ENCODE measurements at regions of chr2 and their contacts with region 1.

Region 1: DNA sequence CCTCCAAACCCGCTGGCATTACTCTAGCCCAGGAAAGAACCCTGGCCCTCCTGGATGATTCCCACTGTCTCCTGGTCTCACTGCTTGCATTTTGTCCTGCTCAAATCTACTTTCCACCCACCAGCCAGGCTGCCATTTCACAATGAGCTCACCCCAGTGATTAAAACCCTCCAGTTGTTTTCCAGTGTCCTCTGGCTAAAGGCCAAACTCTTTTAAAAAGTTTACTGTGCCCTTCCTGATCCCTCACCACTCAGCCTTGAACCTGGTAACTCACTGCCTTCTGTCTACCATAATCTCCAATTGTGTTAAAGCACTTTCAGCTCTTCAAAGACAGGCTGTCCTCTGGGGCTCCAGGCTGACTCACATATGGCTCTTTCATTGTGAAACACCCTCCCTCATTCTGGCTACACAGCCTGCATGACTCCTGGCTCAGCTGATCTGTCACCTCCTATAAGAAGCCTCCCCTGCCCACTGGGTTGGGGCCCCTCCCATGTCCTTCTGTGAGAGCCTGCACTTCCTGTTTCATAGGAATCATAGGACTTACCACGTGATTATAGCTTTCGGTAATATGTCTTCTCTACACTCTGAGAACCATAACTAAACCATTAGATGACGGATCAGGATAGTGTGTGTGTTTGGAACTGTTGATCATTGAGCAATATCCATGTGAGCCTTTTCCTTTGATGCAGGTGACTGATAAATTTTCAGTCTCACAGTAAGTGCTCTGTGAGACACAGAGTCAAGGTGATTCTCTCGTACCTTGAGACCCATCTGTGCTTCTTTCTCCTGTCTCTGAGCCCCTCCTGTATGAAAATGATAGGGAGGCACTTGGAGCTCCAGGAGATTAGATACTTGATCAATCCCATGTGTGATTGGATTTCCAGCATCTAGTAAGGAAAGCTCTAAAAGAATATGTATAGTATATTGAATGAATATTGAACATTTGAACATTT is 590.8 kb upstream of the ID2 start:
- DNase-seq: peak; percentile 85
- H3K4me3 Mint-ChIP-seq: no peak overlapping the region
- H3K27ac Mint-ChIP-seq: no peak overlapping the region
- H3K4me1 Mint-ChIP-seq: no peaks in the 10 kb centered on the region
- H3K27me3 Mint-ChIP-seq: no peaks in the 10 kb centered on the region

Region 2: GRCh38 chr2:7845332-7845731 is 245.7 kb before region 1 on chr2:
- CTCF ChIA-PET with region 1: no interaction called
- intact Hi-C with region 1: loop called (anchors 1 kb)
- DNase-seq: no peak
- H3K4me3 Mint-ChIP-seq: no peak overlapping the region
- H3K27ac Mint-ChIP-seq: no peak overlapping the region
- H3K4me1 Mint-ChIP-seq: peaks cover 19% of the 10 kb centered on the region
- H3K27me3 Mint-ChIP-seq: peaks cover 5% of the 10 kb centered on the region

Region 3: GRCh38 chr2:8154936-8155335 is 63.9 kb after region 1 on chr2:
- CTCF ChIA-PET with region 1: no interaction called
- intact Hi-C with region 1: loop called (anchors 1 kb)
- DNase-seq: peak; percentile 68
- H3K4me3 Mint-ChIP-seq: no peak overlapping the region
- H3K27ac Mint-ChIP-seq: peak overlapping the region; percentile 78
- H3K4me1 Mint-ChIP-seq: peaks cover 16% of the 10 kb centered on the region
- H3K27me3 Mint-ChIP-seq: no peaks in the 10 kb centered on the region

Measured in activated naive CD4-positive, alpha-beta T cell treated with anti-CD3 and anti-CD28 coated beads for 36 hours (primary cell).